ENCODE measurements at regions of chr11 and their contacts with region 1.

Region 1: GRCh38 chr11:72483412-72484186 is 49.3 kb upstream of the CLPB start:
- DNase-seq: no peak
- ATAC-seq: peak in 2 of 4 donors; percentile 16 to 24
- H3K4me3 ChIP-seq: no peak overlapping the region
- H3K27ac ChIP-seq: peak overlapping the region; percentile 23
- H3K4me1 ChIP-seq: peaks cover 5% of the 10 kb centered on the region
- H3K27me3 ChIP-seq: no peaks in the 10 kb centered on the region
- CTCF ChIP-seq: no peak

Region 2: GRCh38 chr11:72418834-72419562 is 64.6 kb before region 1 on chr11:
- intact Hi-C with region 1: no loop called
- DNase-seq: no peak
- ATAC-seq: no peak
- H3K4me3 ChIP-seq: no peak overlapping the region
- H3K27ac ChIP-seq: no peak overlapping the region
- H3K4me1 ChIP-seq: peaks cover 30% of the 10 kb centered on the region
- H3K27me3 ChIP-seq: no peaks in the 10 kb centered on the region
- CTCF ChIP-seq: no peak

Region 3: GRCh38 chr11:72573072-72573854 is 89.7 kb after region 1 on chr11:
- intact Hi-C with region 1: loop called in 1 of 2 experiments (anchors 2 kb)
- DNase-seq: no peak
- ATAC-seq: peak; percentile 68 to 82 (median 77)
- H3K4me3 ChIP-seq: no peak overlapping the region
- H3K27ac ChIP-seq: no peak overlapping the region
- H3K4me1 ChIP-seq: no peaks in the 10 kb centered on the region
- H3K27me3 ChIP-seq: peaks cover 0 to 2% (median 0%) of the 10 kb centered on the region in 3 donors
- CTCF ChIP-seq: peak; percentile 48

Region 4: GRCh38 chr11:72625691-72626413 is 142.3 kb after region 1 on chr11:
- intact Hi-C with region 1: no loop called
- DNase-seq: peak; percentile 55 to 62
- ATAC-seq: peak; percentile 6 to 23 (median 16)
- H3K4me3 ChIP-seq: no peak overlapping the region
- H3K27ac ChIP-seq: peak overlapping the region; percentile 69
- H3K4me1 ChIP-seq: peaks cover 29% of the 10 kb centered on the region
- H3K27me3 ChIP-seq: no peaks in the 10 kb centered on the region
- CTCF ChIP-seq: no peak

Measured in psoas muscle (tissue), 8 donors.